ENCODE measurements at regions of chr21 and their contacts with region 1.

Region 1: DNA sequence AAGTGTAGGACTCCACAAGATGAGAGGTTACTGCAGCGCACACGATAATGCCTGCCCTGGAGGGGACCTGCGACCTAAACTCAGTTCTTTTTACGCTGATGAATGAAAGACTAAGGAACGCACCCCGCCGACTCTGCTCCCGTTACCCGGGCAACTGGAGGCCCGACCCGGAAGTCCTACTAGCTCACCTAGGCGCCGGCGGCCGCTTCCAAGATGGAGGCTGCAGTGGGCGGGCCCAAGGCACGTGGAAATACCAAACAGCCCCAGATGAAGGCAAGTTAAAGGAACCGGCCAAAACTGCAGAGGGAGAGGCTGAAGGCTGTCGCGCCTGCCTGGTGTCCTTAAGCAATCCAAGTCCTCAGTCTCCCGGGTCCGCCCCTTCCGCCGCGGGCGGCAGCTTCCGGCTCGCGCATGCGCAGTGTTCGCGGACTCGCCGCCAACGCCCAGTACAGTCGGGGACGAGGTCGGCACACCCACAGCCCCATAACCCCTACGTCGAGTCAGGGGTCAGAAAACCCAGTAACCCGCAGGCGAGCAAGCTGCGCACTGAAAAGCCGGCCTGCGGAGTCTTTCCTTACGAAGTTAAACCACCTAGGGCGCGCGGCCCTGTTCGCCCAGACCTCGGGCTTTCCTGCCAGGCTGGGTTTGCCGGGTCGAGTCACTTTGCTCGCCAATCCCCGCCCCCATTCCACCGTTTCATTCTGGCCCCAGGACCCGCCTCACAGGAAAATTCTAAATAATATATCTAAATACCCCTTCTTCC is at the start of gene SETD4:
- DNase-seq: peak; percentile 90
- H3K4me3 Mint-ChIP-seq: peak within 1 kb of the TSS; percentile 96
- H3K27ac Mint-ChIP-seq: peak within 1 kb of the TSS; percentile 98
- H3K4me1 Mint-ChIP-seq: peaks cover 35% of the 10 kb centered on the region
- H3K27me3 Mint-ChIP-seq: peaks cover 2% of the 10 kb centered on the region
- total RNA-seq, gene SETD4: 15.5 to 17.4 TPM

Region 2: DNA sequence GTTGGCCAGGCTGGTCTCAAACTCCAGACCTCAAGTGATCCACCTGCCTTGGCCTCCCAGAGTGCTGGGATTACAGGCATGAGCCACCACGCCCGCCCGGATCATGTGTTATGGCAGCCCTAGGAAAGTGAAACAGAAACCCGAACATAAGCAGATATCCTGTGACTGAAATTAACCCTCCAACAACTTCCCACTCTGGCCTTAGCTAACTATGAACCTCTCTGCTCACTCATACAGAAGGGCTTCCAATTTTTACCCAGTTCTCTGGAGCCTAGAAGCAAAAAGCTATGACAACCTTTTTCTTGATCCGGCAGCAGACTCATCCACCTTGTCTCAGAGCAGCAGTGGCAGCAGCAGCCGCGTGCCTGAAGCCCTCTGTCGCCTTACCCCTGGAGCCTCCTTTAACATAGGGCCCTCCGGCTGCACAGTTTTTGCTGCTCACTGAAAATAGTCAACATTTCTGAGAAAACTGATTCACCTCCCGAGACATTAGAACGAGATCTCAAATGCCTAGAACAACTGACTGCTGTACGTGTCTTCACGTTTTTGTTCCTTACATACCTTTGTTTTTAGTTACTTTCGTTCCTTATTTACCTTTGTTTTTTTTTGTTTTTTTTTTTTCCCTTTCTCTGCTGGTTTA is 18.8 kb after region 1 on chr21:
- CTCF ChIA-PET with region 1: no interaction called
- POLR2A ChIA-PET with region 1: interaction called, 27 read pairs
- DNase-seq: peak; percentile 61
- H3K4me3 Mint-ChIP-seq: peak overlapping the region; percentile 77
- H3K27ac Mint-ChIP-seq: peak overlapping the region; percentile 98
- H3K4me1 Mint-ChIP-seq: peaks cover 47% of the 10 kb centered on the region
- H3K27me3 Mint-ChIP-seq: no peaks in the 10 kb centered on the region

Measured in activated CD4-positive, alpha-beta memory T cell treated with anti-CD3 and anti-CD28 coated beads, Interleukin-2, amount 10 ng/mL, durations not matched to agents 7 days and 5 days (primary cell).